Ascending aorta (tissue), 2 donors: ENCODE measurements at regions of chr2 and their contacts with region 1.

Region 1: GRCh38 chr2:71068218-71069035 is at the start of gene NAGK:
- DNase-seq: peak; percentile 86 to 98
- H3K4me3 ChIP-seq: peak within 1 kb of the TSS; percentile 66 to 84
- H3K27ac ChIP-seq: peak within 1 kb of the TSS; percentile 81 to 97
- H3K4me1 ChIP-seq: peaks cover 6 to 22% of the 10 kb centered on the region in 2 donors
- H3K27me3 ChIP-seq: no peaks in the 10 kb centered on the region
- CTCF ChIP-seq: no peak
- total RNA-seq, gene NAGK: 97.4 TPM

Region 2: GRCh38 chr2:69499242-69499641 is 1569.2 kb before region 1 on chr2:
- intact Hi-C with region 1: no loop called
- DNase-seq: no peak
- H3K4me3 ChIP-seq: no peak overlapping the region
- H3K27ac ChIP-seq: no peak overlapping the region
- H3K4me1 ChIP-seq: no peaks in the 10 kb centered on the region
- H3K27me3 ChIP-seq: no peaks in the 10 kb centered on the region
- CTCF ChIP-seq: no peak

Region 3: DNA sequence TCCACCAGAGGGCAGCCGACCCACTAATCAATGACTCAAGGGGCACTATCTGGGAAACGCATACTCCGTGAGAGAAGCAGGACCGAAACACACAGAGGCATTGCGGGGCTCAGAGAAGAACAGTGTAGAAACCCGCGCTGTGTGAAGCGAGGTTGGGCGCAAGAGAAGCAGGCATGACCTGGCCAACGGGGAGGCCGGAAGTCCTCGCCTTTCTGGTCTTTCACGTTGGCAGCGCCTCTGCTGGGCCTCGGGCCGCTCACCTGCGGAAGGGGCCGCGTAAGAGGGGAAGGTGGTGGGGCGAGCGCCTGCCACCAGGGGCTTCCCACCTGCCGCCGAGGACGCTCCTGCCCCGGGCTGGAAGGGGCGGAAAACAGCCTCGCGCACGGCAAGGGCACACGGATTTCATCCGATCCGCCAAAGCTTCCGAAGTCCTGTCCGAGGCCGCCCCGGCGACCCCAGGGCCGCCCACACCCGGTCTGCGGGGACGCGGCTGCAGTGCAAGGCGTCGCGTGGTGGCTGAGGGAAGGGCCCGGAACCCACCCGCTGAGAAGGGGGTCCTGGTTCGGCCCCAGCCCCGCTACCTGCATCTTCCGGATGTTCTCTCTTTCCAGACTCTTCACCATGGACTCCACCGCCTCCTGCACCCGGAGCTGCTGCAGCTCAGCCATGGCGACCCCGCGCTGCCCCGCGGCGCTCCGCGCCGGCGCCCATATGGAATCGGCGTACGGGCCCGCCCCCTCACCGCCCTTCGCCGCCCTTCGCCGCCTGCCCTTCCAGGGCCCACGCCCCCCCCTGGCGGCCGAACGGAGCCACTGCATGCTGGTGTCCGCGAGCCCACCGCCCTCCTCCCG is 766.9 kb before region 1 on chr2 and contains the start of gene FAM136A:
- intact Hi-C with region 1: loop called (anchors 10 kb)
- DNase-seq: peak; percentile 16 to 90
- H3K4me3 ChIP-seq: peak within 1 kb of the TSS; percentile 66 to 84
- H3K27ac ChIP-seq: peak within 1 kb of the TSS; percentile 80
- H3K4me1 ChIP-seq: peaks cover 0 to 5% of the 10 kb centered on the region in 2 donors
- H3K27me3 ChIP-seq: no peaks in the 10 kb centered on the region
- CTCF ChIP-seq: peak; percentile 94 to 99 (median 97)
- total RNA-seq, gene FAM136A: 2.0 TPM

Region 4: DNA sequence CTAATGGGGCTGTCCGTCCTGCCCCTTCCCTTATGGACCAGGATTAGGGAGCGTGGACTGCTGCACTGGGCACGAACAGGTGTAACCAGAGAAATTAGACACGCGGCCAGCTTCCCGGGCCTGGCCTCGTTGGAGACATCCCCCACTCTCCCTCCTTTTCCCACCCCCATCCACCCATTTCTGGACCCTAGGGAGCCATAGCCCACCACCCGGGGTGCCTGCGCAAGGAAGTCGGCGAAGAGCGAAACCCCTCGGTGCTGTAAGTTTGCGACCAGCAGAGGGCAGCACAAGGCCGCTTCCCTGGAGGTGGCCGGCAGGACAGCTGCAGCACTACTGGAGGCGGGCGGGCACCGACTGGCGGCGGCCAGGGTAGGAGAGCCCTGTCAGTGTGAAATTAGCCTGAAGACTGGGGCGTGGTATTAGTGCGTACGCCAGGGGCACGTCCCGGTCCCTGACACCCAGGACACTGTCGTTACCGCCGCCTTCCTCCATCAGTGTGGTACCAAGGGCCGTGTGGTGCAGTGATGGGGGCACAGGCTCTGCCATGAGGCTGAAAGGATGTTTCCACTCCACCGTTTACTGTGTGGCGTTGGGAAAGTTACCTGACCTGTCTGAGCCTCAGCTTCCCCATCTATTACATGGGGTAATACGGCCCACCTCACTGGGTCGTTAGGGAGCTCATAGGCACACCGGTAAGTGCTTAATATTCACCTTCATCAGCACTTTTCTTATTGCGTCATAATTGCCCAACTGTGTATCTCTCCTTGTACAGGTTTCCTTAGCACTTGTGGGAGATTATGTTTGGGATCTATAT is 196.8 kb before region 1 on chr2:
- intact Hi-C with region 1: no loop called
- DNase-seq: peak in 1 of 2 donors; percentile 88
- H3K4me3 ChIP-seq: peak overlapping the region; percentile 3 to 42
- H3K27ac ChIP-seq: no peak overlapping the region
- H3K4me1 ChIP-seq: peaks cover 0 to 2% of the 10 kb centered on the region in 2 donors
- H3K27me3 ChIP-seq: no peaks in the 10 kb centered on the region
- CTCF ChIP-seq: peak; percentile 71 to 90 (median 85)

Region 5: DNA sequence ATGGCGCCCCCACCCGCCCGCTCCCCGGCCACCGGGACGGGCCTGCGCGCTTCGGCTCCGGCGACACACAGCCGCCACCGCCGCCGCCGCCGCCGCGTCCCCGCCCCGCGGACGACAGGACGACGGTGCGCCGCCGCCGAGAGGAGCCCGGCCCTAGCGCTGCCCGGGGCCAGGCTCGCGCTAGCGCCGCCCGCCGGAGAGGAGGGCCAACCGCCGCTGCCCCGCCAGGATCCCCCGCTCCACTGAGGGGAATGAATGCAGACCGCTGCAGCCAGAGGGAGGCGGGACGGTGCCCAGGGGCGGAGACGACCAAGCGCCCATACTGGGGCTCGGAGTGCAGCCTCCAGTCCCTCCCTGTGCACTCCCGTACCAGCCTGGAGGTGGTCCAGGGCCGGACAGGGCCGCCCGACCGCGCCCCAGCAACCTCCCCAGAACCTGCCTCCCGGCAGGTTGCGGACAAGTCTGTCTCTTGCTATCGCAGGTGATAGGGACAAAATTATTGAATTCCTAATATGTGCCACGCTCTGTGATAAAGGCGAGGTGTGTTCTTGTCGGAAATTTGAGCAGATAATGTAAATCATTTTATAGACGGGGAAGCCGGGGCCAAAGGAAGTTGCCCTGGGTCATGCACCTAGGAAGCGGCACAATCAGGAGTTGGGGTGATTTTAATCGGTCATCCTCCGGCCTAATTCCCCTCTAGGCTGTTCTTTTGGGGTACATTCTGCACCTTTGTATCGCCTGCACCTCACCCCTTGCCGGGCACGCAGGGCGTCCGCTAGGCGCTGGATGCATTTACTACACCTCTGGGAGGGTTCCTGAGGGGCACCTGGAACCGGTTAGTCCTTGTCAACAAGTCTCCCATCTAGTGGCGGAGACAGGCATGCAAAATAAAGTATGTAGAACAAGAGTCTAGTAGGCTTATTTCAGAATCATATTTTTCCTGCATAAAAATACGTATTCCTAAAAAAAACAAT is 73.4 kb before region 1 on chr2 and contains the start of gene TEX261:
- intact Hi-C with region 1: loop called (anchors 2 kb)
- DNase-seq: peak; percentile 46 to 95
- H3K4me3 ChIP-seq: peak within 1 kb of the TSS; percentile 84 to 95
- H3K27ac ChIP-seq: peak within 1 kb of the TSS; percentile 84 to 92
- H3K4me1 ChIP-seq: peaks cover 2 to 17% of the 10 kb centered on the region in 2 donors
- H3K27me3 ChIP-seq: no peaks in the 10 kb centered on the region
- CTCF ChIP-seq: peak; percentile 56 to 73 (median 60)
- total RNA-seq, gene TEX261: 133 TPM

Region 6: GRCh38 chr2:71042287-71042686 is 26.1 kb before region 1 on chr2:
- intact Hi-C with region 1: no loop called
- DNase-seq: no peak
- H3K4me3 ChIP-seq: no peak overlapping the region
- H3K27ac ChIP-seq: no peak overlapping the region
- H3K4me1 ChIP-seq: no peaks in the 10 kb centered on the region
- H3K27me3 ChIP-seq: no peaks in the 10 kb centered on the region
- CTCF ChIP-seq: no peak

Region 7: GRCh38 chr2:71130113-71130904 is 61.9 kb after region 1 on chr2 and contains the starts of genes MCEE and MPHOSPH10:
- intact Hi-C with region 1: loop called (anchors 1 kb)
- DNase-seq: peak; percentile 47 to 94
- H3K4me3 ChIP-seq: peak within 1 kb of the TSS; percentile 66 to 72
- H3K27ac ChIP-seq: peak within 1 kb of the TSS; percentile 84 to 94
- H3K4me1 ChIP-seq: peaks cover 0 to 17% of the 10 kb centered on the region in 2 donors
- H3K27me3 ChIP-seq: no peaks in the 10 kb centered on the region
- CTCF ChIP-seq: no peak
- total RNA-seq, gene MCEE: 2.0 TPM
- total RNA-seq, gene MPHOSPH10: 23.0 TPM

Region 8: GRCh38 chr2:71226965-71227560 is 158.6 kb after region 1 on chr2 and contains the start of gene PAIP2B:
- intact Hi-C with region 1: loop called (anchors 2 kb)
- DNase-seq: peak; percentile 97 to 99
- H3K4me3 ChIP-seq: peak within 1 kb of the TSS; percentile 67 to 85
- H3K27ac ChIP-seq: peak within 1 kb of the TSS; percentile 46 to 80
- H3K4me1 ChIP-seq: peaks cover 0 to 13% of the 10 kb centered on the region in 2 donors
- H3K27me3 ChIP-seq: no peaks in the 10 kb centered on the region
- CTCF ChIP-seq: no peak
- total RNA-seq, gene PAIP2B: 0.32 TPM

Region 9: GRCh38 chr2:71331581-71332434 is 263.4 kb after region 1 on chr2 and contains the start of gene ZNF638:
- intact Hi-C with region 1: loop called (anchors 5 kb)
- DNase-seq: peak; percentile 66 to 94
- H3K4me3 ChIP-seq: peak within 1 kb of the TSS; percentile 67 to 93
- H3K27ac ChIP-seq: peak within 1 kb of the TSS; percentile 79 to 93
- H3K4me1 ChIP-seq: peaks cover 4 to 20% of the 10 kb centered on the region in 2 donors
- H3K27me3 ChIP-seq: no peaks in the 10 kb centered on the region
- CTCF ChIP-seq: peak; percentile 63 to 81 (median 81)
- total RNA-seq, gene ZNF638: 56.0 TPM